ENCODE measurements at regions of chr1 and their contacts with region 1.

Region 1: GRCh38 chr1:205162301-205162700 is 40.5 kb upstream of the RBBP5 start:
- DNase-seq: no peak
- ATAC-seq: no peak
- H3K4me3 ChIP-seq: no peak overlapping the region
- H3K4me3 Mint-ChIP-seq: no peak overlapping the region
- H3K27ac ChIP-seq: no peak overlapping the region
- H3K27ac Mint-ChIP-seq: no peak overlapping the region
- H3K4me1 ChIP-seq: no peaks in the 10 kb centered on the region
- H3K4me1 Mint-ChIP-seq: peaks cover 0 to 9% (median 5%) of the 10 kb centered on the region in 3 donors
- H3K27me3 ChIP-seq: no peaks in the 10 kb centered on the region
- H3K27me3 Mint-ChIP-seq: no peaks in the 10 kb centered on the region

Region 2: GRCh38 chr1:205121660-205122488 is 40.4 kb before region 1 on chr1 and contains the start of gene RBBP5:
- CTCF ChIA-PET with region 1: no interaction called
- POLR2A ChIA-PET with region 1: no interaction called
- DNase-seq: peak; percentile 88 to 98 (median 94)
- ATAC-seq: peak; percentile 93 to 98 (median 98)
- H3K4me3 ChIP-seq: peak within 1 kb of the TSS; percentile 88 to 92
- H3K4me3 Mint-ChIP-seq: peak within 1 kb of the TSS; percentile 97 to 99 (median 98)
- H3K27ac ChIP-seq: peak within 1 kb of the TSS; percentile 99
- H3K27ac Mint-ChIP-seq: peak within 1 kb of the TSS; percentile 99 to 100
- H3K4me1 ChIP-seq: peaks cover 16 to 17% of the 10 kb centered on the region in 2 experiments
- H3K4me1 Mint-ChIP-seq: peaks cover 50 to 55% (median 52%) of the 10 kb centered on the region in 3 donors
- H3K27me3 ChIP-seq: no peaks in the 10 kb centered on the region
- H3K27me3 Mint-ChIP-seq: no peaks in the 10 kb centered on the region
- total RNA-seq, gene RBBP5: 13.9 to 24.3 (median 22.3) TPM

Region 3: GRCh38 chr1:205183676-205184335 is 21.5 kb after region 1 on chr1:
- CTCF ChIA-PET with region 1: interaction called in 1 of 2 experiments, 10 read pairs
- POLR2A ChIA-PET with region 1: no interaction called
- DNase-seq: no peak
- ATAC-seq: peak in 1 of 4 experiments; percentile 22
- H3K4me3 ChIP-seq: no peak overlapping the region
- H3K4me3 Mint-ChIP-seq: peak overlapping the region in 1 of 3 donors; percentile 40
- H3K27ac ChIP-seq: no peak overlapping the region
- H3K27ac Mint-ChIP-seq: peak overlapping the region; percentile 5 to 24
- H3K4me1 ChIP-seq: peaks cover 7 to 17% of the 10 kb centered on the region in 2 experiments
- H3K4me1 Mint-ChIP-seq: peaks cover 48 to 50% (median 49%) of the 10 kb centered on the region in 3 donors
- H3K27me3 ChIP-seq: no peaks in the 10 kb centered on the region
- H3K27me3 Mint-ChIP-seq: no peaks in the 10 kb centered on the region

Region 4: GRCh38 chr1:205493241-205494085 is 331.2 kb after region 1 on chr1:
- CTCF ChIA-PET with region 1: no interaction called
- POLR2A ChIA-PET with region 1: no interaction called
- DNase-seq: no peak
- ATAC-seq: no peak
- H3K4me3 ChIP-seq: no peak overlapping the region
- H3K4me3 Mint-ChIP-seq: no peak overlapping the region
- H3K27ac ChIP-seq: no peak overlapping the region
- H3K27ac Mint-ChIP-seq: no peak overlapping the region
- H3K4me1 ChIP-seq: no peaks in the 10 kb centered on the region
- H3K4me1 Mint-ChIP-seq: no peaks in the 10 kb centered on the region
- H3K27me3 ChIP-seq: peaks cover 3 to 58% of the 10 kb centered on the region in 2 experiments
- H3K27me3 Mint-ChIP-seq: peaks cover 27 to 35% of the 10 kb centered on the region in 2 donors

Region 5: GRCh38 chr1:205528887-205529825 is 366.9 kb after region 1 on chr1:
- CTCF ChIA-PET with region 1: no interaction called
- POLR2A ChIA-PET with region 1: no interaction called
- DNase-seq: peak; percentile 41 to 87 (median 77)
- ATAC-seq: peak; percentile 77 to 93 (median 86)
- H3K4me3 ChIP-seq: peak overlapping the region in 1 of 2 donors; percentile 26
- H3K4me3 Mint-ChIP-seq: peak overlapping the region in 2 of 3 donors; percentile 53 to 68
- H3K27ac ChIP-seq: no peak overlapping the region
- H3K27ac Mint-ChIP-seq: no peak overlapping the region
- H3K4me1 ChIP-seq: peaks cover 0 to 9% of the 10 kb centered on the region in 2 experiments
- H3K4me1 Mint-ChIP-seq: peaks cover 3 to 6% (median 4%) of the 10 kb centered on the region in 3 donors
- H3K27me3 ChIP-seq: peaks cover 0 to 28% of the 10 kb centered on the region in 2 experiments
- H3K27me3 Mint-ChIP-seq: peaks cover 4 to 11% of the 10 kb centered on the region in 2 donors